ENCODE measurements at regions of chr2 and their contacts with region 1.

Region 1: GRCh38 chr2:238352361-238352760 is 32.0 kb downstream of the TRAF3IP1 start:
- DNase-seq: peak in 1 of 42 donors; percentile 12

Region 2: DNA sequence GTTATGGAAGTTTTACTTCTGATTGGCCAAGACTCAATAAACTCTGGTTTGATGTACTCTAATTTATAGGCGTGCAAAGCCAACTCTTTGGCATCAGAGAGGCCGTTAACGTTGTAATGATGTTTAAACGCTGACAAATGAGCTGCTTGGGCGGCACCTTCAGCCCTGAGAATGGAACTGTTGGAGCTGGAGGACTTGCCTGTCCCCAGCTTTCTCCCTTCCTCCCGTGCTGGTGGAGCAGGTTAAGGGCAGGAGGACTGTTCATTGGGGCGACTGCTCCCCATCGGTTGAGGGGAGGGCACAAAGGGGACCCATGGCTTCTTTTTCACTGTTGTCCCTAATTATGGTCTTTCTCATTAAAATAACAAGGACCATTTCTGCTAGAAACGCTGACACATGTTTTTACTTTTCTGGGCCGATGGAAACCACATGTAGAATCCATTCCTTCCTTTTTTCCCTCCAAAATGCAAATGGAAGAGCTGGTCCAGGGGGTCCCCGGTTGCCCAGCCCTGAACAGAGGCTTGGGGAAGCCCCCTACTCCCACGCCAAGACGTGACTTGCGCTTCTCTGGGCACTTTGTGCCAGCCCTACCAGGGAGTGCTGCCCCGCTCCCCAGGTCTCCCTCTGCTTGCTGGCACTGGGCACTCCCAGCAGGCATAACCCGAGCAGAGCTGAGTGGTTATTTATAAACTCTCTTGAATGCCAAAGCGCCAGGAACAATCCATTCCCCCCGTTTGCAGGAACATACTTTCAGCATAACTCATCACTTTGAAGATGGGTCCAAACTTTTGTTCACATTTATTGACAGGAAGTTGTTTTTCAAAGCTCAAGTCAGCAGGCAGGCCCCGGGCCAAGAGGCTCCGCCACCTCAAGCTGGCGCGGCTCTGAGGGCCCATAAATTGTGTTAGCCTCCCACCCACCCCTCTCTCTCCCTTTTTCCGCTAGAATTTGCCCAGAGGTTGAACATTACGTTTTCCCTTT is 244.5 kb after region 1 on chr2:
- intact Hi-C with region 1: no loop called
- DNase-seq: peak in 4 of 42 donors; percentile 8 to 47 (median 26)

Region 3: DNA sequence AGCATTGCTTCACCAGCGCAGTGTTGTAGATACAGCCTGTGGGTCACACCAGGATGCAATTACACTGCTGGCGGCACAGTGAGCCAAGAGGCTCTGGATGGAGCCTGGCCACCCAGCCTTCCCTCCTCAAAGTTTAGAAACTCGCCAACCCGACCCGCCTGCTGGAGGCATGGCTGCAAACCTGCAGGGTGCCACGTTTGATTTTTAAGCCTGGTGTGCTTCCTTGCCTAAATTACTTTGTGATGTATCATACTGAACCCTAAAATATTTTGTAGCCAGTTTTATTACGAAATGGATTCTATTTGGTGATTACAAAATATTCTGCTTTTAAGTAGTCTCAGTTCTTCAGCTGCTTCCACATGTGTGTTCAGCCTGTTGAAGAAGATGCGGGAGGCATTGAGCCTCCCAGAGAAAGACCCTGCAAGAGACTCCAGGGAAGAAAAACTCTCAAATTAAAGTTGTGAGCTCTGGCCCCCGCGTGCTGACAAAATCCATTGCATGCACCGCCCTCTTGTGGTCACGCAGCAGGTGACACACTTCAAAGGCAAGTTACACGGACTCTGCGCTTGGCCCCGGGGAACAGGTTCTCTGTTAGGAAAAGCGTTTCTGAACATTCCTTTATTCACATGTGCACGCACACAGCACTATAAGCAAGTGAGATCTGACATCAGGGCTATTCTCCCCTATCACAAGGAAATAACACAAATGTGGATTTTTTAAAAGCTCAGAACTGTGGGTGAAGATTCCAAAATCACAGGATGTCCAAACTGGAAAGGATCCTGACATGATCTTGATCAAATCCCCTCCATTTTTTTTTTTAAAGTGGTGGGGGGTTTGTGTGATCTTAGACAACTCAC is 432.5 kb after region 1 on chr2:
- intact Hi-C with region 1: loop called (anchors 10 kb)
- DNase-seq: peak; percentile 62 to 87 (median 77)

Measured in head of caudate nucleus (tissue), 42 donors.